Activated CD4-positive, alpha-beta T cell treated with anti-CD3 and anti-CD28 coated beads, Interleukin-2, amount 10 ng/mL, durations not matched to agents 7 days and 5 days (primary cell): ENCODE measurements at regions of chr17 and their contacts with region 1.

Region 1: DNA sequence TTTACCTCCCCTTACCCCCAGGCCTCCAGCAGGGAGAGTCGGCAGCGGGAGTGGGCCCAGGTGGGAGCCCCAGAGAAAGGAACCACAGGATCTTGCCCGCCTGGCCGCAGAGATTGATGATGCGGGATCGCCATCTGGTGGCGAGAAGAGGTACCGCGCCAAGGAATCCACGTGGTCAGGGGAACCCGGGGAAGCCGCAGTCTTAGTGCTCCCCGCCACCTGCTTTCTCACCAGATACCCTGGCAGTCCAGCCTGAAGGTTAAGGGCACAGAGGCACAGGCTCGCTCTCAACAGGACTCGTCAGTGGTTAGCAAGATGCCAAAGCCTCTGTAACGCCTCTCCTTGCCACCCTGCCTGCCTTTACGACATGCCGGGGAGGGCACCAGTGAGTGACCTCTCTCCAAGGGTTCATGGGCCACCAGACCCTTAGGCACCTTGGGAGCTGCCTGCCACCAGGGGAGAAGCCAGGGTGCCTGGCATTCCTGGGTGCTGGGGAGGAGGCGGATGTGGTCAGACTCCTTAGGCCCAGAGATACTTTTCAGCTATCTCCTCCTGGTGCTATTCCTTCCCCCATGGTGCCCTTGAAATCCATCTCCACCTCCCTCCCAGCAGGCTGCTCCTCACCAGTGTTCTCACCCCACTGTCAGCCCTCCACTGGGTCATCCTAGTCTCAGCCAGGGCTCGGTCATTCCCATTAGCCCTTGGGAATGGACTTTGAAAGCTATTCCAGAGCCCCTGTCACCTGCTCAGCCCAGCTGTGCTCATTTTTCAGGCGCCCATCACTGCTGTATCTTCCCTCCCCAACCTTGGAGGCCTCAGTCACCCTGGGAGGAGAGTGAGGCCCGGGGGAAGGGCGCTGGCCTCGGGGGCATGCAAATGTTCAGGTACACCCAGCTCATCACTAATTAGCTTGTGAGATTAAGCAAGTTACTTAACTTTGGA is 5.5 kb upstream of the RHBDF2 start:
- DNase-seq: peak; percentile 90
- H3K4me3 Mint-ChIP-seq: no peak overlapping the region
- H3K27ac Mint-ChIP-seq: peak overlapping the region; percentile 64
- H3K4me1 Mint-ChIP-seq: peaks cover 45% of the 10 kb centered on the region
- H3K27me3 Mint-ChIP-seq: peaks cover 7% of the 10 kb centered on the region

Region 2: GRCh38 chr17:76408052-76408849 is 98.4 kb before region 1 on chr17:
- CTCF ChIA-PET with region 1: interaction called, 10 read pairs
- POLR2A ChIA-PET with region 1: no interaction called
- DNase-seq: peak; percentile 79
- H3K4me3 Mint-ChIP-seq: no peak overlapping the region
- H3K27ac Mint-ChIP-seq: no peak overlapping the region
- H3K4me1 Mint-ChIP-seq: peaks cover 6% of the 10 kb centered on the region
- H3K27me3 Mint-ChIP-seq: no peaks in the 10 kb centered on the region

Region 3: DNA sequence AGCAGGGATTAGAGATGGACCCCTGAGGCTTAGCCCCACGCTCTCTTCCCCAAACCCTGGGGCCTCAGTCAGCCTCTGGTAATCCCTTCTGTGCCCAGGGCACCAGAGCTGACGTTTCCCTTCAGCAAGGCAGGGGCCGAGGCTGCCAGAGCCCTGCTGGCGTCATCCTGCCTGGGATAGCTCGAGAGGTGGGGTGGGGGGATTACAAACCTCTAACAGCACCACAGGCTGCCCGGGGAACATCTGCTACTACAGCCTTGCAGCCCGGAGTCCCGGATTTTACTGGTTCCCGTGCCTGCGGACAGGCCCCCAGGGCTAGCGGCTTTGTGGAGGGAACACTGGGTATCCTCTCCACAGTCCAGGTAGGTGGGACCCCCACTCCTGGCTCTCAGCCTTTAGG is 39.3 kb before region 1 on chr17 and contains the start of gene AANAT:
- CTCF ChIA-PET with region 1: interaction called, 16 read pairs
- POLR2A ChIA-PET with region 1: no interaction called
- DNase-seq: no peak
- H3K4me3 Mint-ChIP-seq: no peak within 1 kb of the TSS
- H3K27ac Mint-ChIP-seq: no peak within 1 kb of the TSS
- H3K4me1 Mint-ChIP-seq: peaks cover 7% of the 10 kb centered on the region
- H3K27me3 Mint-ChIP-seq: no peaks in the 10 kb centered on the region
- total RNA-seq, gene AANAT: not detected

Region 4: DNA sequence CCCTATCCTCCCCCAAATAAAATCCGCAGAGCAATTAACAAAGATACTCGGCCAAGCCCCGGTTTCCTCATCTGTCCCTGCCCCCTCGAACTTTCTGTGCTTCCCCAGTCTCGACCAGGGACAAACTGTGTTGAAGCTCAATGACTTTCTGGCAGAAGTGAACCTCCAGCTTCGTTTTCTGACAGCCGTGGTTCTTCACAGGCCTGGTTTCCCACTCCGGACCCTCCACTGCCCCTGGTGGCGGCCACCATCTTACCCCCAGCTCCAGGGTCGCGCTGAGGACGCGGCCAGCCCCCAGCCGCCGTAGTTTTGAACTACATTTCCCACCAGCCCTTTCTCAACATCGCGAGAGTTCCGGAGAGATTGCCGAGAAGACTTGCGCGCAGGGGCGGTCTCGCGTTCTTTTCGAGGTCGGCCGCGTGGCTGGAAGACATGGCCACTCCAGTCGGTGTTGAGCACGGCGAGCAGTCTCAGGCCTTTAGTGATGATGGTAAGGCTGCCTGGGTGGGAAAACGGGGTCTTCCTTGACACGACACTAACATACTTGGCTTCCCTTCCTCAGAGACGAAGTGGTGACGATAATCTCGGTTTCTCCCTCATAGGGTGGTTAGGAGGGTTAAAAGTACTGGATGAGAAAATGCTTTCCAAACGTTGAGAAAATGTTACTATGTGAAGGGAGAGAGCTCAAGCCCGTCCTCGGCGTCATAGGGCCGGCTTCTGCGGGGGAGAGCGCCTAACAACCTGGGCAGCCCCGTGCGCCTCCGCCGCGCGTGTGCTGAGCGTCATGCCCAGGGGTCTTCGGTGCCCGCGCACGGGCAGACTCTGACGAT is 50.9 kb after region 1 on chr17:
- CTCF ChIA-PET with region 1: no interaction called
- POLR2A ChIA-PET with region 1: no interaction called
- DNase-seq: peak; percentile 96
- H3K4me3 Mint-ChIP-seq: peak overlapping the region; percentile 89
- H3K27ac Mint-ChIP-seq: peak overlapping the region; percentile 94
- H3K4me1 Mint-ChIP-seq: peaks cover 52% of the 10 kb centered on the region
- H3K27me3 Mint-ChIP-seq: no peaks in the 10 kb centered on the region